Activated CD4-positive, alpha-beta T cell treated with anti-CD3 and anti-CD28 coated beads for 36 hours (primary cell): ENCODE measurements at regions of chr12 and their contacts with region 1.

Region 1: GRCh38 chr12:55926738-55927587 is 731 bp downstream of the PYM1 start:
- DNase-seq: peak; percentile 97
- ATAC-seq: peak; percentile 40
- H3K4me3 Mint-ChIP-seq: peak overlapping the region; percentile 100
- H3K27ac Mint-ChIP-seq: peak overlapping the region; percentile 95
- H3K4me1 Mint-ChIP-seq: peaks cover 48% of the 10 kb centered on the region
- H3K27me3 Mint-ChIP-seq: no peaks in the 10 kb centered on the region

Region 2: GRCh38 chr12:55607821-55608594 is 319.0 kb before region 1 on chr12:
- CTCF ChIA-PET with region 1: no interaction called
- POLR2A ChIA-PET with region 1: no interaction called
- intact Hi-C with region 1: no loop called
- DNase-seq: no peak
- ATAC-seq: no peak
- H3K4me3 Mint-ChIP-seq: no peak overlapping the region
- H3K27ac Mint-ChIP-seq: no peak overlapping the region
- H3K4me1 Mint-ChIP-seq: peaks cover 13% of the 10 kb centered on the region
- H3K27me3 Mint-ChIP-seq: peaks cover 19% of the 10 kb centered on the region

Region 3: GRCh38 chr12:55728939-55729823 is 197.8 kb before region 1 on chr12 and contains the start of gene CD63:
- CTCF ChIA-PET with region 1: interaction called, 3 read pairs
- POLR2A ChIA-PET with region 1: no interaction called
- intact Hi-C with region 1: loop called in 1 of 2 experiments (anchors 1 kb)
- DNase-seq: peak; percentile 89
- ATAC-seq: peak; percentile 73
- H3K4me3 Mint-ChIP-seq: peak within 1 kb of the TSS; percentile 93
- H3K27ac Mint-ChIP-seq: peak within 1 kb of the TSS; percentile 95
- H3K4me1 Mint-ChIP-seq: peaks cover 34% of the 10 kb centered on the region
- H3K27me3 Mint-ChIP-seq: no peaks in the 10 kb centered on the region
- total RNA-seq, gene CD63: 113 to 122 TPM

Region 4: GRCh38 chr12:55806982-55807381 is 120.0 kb before region 1 on chr12:
- CTCF ChIA-PET with region 1: no interaction called
- POLR2A ChIA-PET with region 1: no interaction called
- intact Hi-C with region 1: no loop called
- DNase-seq: no peak
- ATAC-seq: no peak
- H3K4me3 Mint-ChIP-seq: no peak overlapping the region
- H3K27ac Mint-ChIP-seq: no peak overlapping the region
- H3K4me1 Mint-ChIP-seq: peaks cover 22% of the 10 kb centered on the region
- H3K27me3 Mint-ChIP-seq: no peaks in the 10 kb centered on the region

Region 5: GRCh38 chr12:55915482-55915859 is 11.5 kb before region 1 on chr12:
- CTCF ChIA-PET with region 1: interaction called, 13 read pairs
- POLR2A ChIA-PET with region 1: interaction called, 5 read pairs
- intact Hi-C with region 1: no loop called
- DNase-seq: no peak
- ATAC-seq: peak; percentile 23
- H3K4me3 Mint-ChIP-seq: no peak overlapping the region
- H3K27ac Mint-ChIP-seq: peak overlapping the region; percentile 60
- H3K4me1 Mint-ChIP-seq: peaks cover 38% of the 10 kb centered on the region
- H3K27me3 Mint-ChIP-seq: no peaks in the 10 kb centered on the region

Region 6: GRCh38 chr12:55982319-55982936 is 55.5 kb after region 1 on chr12:
- CTCF ChIA-PET with region 1: no interaction called
- POLR2A ChIA-PET with region 1: no interaction called
- intact Hi-C with region 1: no loop called
- DNase-seq: no peak
- ATAC-seq: no peak
- H3K4me3 Mint-ChIP-seq: no peak overlapping the region
- H3K27ac Mint-ChIP-seq: no peak overlapping the region
- H3K4me1 Mint-ChIP-seq: peaks cover 10% of the 10 kb centered on the region
- H3K27me3 Mint-ChIP-seq: no peaks in the 10 kb centered on the region

Region 7: DNA sequence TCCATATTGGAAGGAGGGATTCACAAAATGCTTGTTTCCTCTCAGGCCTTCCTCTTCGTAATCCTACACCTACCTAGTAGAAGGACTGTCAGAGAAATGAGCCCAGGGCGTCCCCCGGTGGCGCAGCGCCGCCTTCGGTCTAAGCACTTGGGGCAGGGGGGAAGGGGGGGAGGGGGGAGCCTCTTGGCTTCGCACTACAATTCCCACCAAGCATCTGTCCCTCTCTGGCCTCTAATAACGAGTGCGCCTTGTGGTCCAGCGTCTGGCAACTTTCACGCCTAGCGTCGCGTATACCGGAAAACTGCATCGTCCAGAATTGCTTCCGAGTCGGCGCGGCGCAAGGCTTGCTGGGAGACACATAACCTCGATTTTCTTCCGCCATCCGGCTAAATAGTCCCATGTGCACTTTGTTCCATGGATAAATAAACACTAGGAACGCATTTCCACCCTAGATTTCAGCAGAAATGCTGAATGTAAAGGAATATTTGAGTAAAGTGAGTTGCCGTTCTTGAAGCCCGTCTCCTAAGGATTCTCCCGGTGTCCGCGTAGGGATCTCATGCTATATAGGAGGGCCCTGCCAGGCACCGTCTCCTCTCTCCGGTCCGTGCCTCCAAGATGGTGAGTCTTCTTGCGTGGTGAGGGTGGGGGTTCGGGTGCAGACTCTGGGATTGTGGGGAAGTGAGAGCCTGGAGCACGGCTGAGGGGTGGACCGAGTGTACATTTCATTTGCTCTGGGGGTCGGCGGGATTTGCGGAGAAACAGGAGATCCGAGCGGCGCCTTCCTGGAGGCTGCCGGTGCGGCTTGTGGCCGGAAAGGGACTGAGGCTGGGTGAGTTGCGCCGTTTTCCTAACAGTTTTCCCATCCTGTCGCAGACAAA is 114.8 kb after region 1 on chr12 and contains the start of gene RPS26:
- CTCF ChIA-PET with region 1: interaction called, 8 read pairs
- POLR2A ChIA-PET with region 1: no interaction called
- intact Hi-C with region 1: loop called (anchors 1 to 2 kb)
- DNase-seq: peak; percentile 97
- ATAC-seq: peak; percentile 92
- H3K4me3 Mint-ChIP-seq: peak within 1 kb of the TSS; percentile 91
- H3K27ac Mint-ChIP-seq: peak within 1 kb of the TSS; percentile 99
- H3K4me1 Mint-ChIP-seq: peaks cover 61% of the 10 kb centered on the region
- H3K27me3 Mint-ChIP-seq: no peaks in the 10 kb centered on the region
- total RNA-seq, gene RPS26: 33.9 to 64.0 TPM

Region 8: GRCh38 chr12:56333679-56334489 is 406.9 kb after region 1 on chr12 and contains the start of gene PAN2:
- CTCF ChIA-PET with region 1: no interaction called
- POLR2A ChIA-PET with region 1: no interaction called
- intact Hi-C with region 1: loop called in 1 of 2 experiments (anchors 5 kb)
- DNase-seq: peak; percentile 96
- ATAC-seq: peak; percentile 88
- H3K4me3 Mint-ChIP-seq: peak within 1 kb of the TSS; percentile 83
- H3K27ac Mint-ChIP-seq: peak within 1 kb of the TSS; percentile 99
- H3K4me1 Mint-ChIP-seq: peaks cover 37% of the 10 kb centered on the region
- H3K27me3 Mint-ChIP-seq: no peaks in the 10 kb centered on the region
- total RNA-seq, gene PAN2: 54.6 to 62.5 TPM

Region 9: DNA sequence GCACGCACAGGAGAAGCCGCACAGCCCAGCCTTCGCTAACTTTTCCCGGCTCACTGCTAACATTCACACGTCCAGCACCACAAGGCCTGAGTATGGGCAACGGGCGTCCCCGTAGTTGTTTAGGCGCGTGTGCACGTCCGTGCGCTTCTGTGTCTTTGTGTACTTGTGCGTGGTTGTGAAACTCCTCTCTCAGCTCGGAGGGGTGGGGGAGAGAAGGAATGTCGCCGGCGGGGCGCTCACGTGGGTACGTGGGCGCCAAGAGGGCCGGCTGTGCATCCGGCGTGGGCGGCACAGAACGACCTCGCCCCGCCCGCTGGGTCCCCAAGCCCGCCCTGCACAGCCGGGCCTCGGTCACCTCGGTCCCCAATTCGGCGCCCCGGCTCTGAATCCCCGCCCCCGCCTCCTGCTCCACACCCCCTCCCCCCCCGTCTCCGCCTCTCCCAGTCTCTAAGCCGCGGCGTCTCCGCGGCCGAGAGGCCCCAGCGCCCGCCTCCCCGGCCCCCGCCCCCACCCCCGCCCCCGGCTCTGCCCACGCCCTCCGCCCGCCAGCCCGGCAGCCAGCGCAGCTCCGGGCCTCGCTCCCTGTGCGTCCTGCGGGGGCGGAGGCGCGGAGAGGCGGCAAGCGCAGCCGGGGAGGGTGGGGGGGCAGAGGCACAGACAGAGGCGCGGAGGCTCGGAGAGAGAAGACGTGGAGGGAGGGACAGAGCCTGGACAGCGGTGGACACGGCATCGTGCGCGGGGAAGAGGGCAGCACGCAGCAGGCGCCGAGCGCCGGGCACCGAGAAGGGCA is 1161.7 kb after region 1 on chr12 and contains the start of gene NAB2:
- CTCF ChIA-PET with region 1: no interaction called
- POLR2A ChIA-PET with region 1: interaction called, 3 read pairs
- intact Hi-C with region 1: loop called in 1 of 2 experiments (anchors 10 kb)
- DNase-seq: peak; percentile 95
- ATAC-seq: peak; percentile 49
- H3K4me3 Mint-ChIP-seq: peak within 1 kb of the TSS; percentile 93
- H3K27ac Mint-ChIP-seq: peak within 1 kb of the TSS; percentile 95
- H3K4me1 Mint-ChIP-seq: peaks cover 63% of the 10 kb centered on the region
- H3K27me3 Mint-ChIP-seq: no peaks in the 10 kb centered on the region
- total RNA-seq, gene NAB2: 46.8 to 48.6 TPM